ENCODE measurements at regions of chr13 and their contacts with region 1.

Region 1: GRCh38 chr13:112873851-112874750 is 94.9 kb upstream of the MCF2L start:
- DNase-seq: peak; percentile 10
- H3K4me3 ChIP-seq: no peak overlapping the region
- H3K27ac ChIP-seq: no peak overlapping the region
- H3K27me3 ChIP-seq: no peaks in the 10 kb centered on the region
- CTCF ChIP-seq: peak; percentile 95

Region 2: DNA sequence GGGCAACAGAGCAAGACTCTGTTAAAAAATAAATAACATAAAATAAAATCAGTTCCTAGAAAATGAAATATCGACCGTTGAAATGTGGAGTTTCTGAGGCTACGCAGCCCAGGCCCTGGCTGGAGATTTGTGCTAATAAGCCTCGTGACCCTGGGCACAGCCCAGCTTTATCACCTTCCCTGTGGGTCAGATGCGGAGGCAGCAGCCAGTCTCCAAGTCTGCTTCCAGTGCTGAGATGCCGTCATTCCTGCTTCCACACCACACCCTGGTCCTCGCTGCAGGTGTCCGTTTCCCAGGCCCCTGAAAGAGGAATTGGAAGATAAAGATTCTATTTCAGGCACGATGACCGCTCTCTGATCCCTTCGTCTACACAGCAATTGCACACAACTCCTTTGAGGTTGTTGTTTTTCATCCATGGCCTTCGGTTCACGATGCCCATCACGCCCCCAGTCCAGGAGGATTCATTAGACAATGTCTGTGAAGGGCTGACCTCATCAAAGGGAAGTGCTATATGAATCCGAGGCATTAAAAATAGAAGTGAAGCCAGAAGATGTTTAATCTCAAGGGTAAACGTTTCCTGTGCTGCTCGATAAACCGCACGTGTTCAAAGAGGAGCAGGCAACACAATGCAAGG is 232.5 kb before region 1 on chr13:
- CTCF ChIA-PET with region 1: interaction called, 18 read pairs
- POLR2A ChIA-PET with region 1: no interaction called
- DNase-seq: no peak
- H3K4me3 ChIP-seq: no peak overlapping the region
- H3K27ac ChIP-seq: no peak overlapping the region
- H3K27me3 ChIP-seq: peaks cover 23% of the 10 kb centered on the region
- CTCF ChIP-seq: no peak

Region 3: GRCh38 chr13:112783135-112783977 is 90.7 kb before region 1 on chr13:
- CTCF ChIA-PET with region 1: interaction called, 10 read pairs
- POLR2A ChIA-PET with region 1: no interaction called
- DNase-seq: peak; percentile 47
- H3K4me3 ChIP-seq: no peak overlapping the region
- H3K27ac ChIP-seq: peak overlapping the region; percentile 87
- H3K27me3 ChIP-seq: no peaks in the 10 kb centered on the region
- CTCF ChIP-seq: no peak

Region 4: GRCh38 chr13:112885782-112886268 is 11.7 kb after region 1 on chr13:
- CTCF ChIA-PET with region 1: interaction called, 15 read pairs
- POLR2A ChIA-PET with region 1: no interaction called
- DNase-seq: peak; percentile 68
- H3K4me3 ChIP-seq: peak overlapping the region; percentile 43
- H3K27ac ChIP-seq: no peak overlapping the region
- H3K27me3 ChIP-seq: peaks cover 14% of the 10 kb centered on the region
- CTCF ChIP-seq: no peak

Measured in AG04450 (cell line).